A673 (cell line): ENCODE measurements at regions of chr14 and their contacts with region 1.

Region 1: DNA sequence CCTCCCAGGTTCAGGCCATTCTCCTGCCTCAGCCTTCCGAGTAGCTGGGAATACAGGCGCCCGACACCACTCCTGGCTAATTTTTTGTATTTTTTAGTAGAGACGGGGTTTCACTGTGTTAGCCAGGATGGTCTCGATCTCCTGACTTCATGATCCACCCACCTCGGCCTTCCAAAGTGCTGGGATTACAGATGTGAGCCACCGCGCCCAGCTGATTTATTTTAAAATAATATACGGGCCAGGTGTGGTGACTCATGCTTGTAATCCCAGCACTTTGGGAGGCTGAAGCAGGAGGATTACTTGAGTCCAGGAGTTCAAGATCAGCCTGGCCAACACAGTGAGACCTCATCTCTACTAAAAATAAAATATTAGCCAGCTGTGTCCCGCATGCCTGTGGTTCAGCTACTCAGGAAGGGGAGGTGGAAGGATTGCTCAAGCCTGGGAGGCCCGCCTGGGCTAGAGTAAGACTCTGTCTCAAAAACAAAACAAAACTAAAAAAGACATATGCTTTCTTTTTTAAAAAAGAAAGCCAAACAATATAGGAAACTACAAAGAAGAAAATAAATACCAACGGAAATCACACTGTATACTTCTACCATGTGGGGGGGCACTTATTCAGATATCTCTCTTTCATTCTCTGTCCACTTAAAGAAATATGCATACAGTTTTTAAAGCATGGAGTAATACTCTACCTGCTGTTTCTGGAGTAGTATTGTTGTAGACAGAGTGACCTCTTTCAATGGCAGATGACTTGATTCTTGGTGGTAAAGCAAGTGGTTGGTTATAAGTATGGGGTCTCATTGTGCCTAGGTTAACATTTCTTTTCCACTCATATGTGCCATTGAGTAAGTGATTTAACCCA is 930 bp upstream of the MIA2 start:
- DNase-seq: no peak
- H3K4me3 ChIP-seq: no peak overlapping the region
- H3K27ac ChIP-seq: no peak overlapping the region
- H3K4me1 ChIP-seq: no peaks in the 10 kb centered on the region
- H3K27me3 ChIP-seq: no peaks in the 10 kb centered on the region
- CTCF ChIP-seq: no peak

Region 2: GRCh38 chr14:39368261-39368959 is 135.6 kb after region 1 on chr14:
- CTCF ChIA-PET with region 1: no interaction called
- POLR2A ChIA-PET with region 1: no interaction called
- intact Hi-C with region 1: loop called (anchors 5 kb)
- DNase-seq: peak; percentile 81
- H3K4me3 ChIP-seq: no peak overlapping the region
- H3K27ac ChIP-seq: no peak overlapping the region
- H3K4me1 ChIP-seq: no peaks in the 10 kb centered on the region
- H3K27me3 ChIP-seq: no peaks in the 10 kb centered on the region
- CTCF ChIP-seq: peak; percentile 79